ENCODE measurements at regions of chr3 and their contacts with region 1.

Region 1: GRCh38 chr3:12891985-12892839 is 50.8 kb upstream of the RPL32 start:
- DNase-seq: peak; percentile 78
- ATAC-seq: peak; percentile 55
- H3K4me3 ChIP-seq: peak overlapping the region; percentile 50
- H3K27ac ChIP-seq: no peak overlapping the region
- H3K4me1 ChIP-seq: peaks cover 26% of the 10 kb centered on the region
- H3K27me3 ChIP-seq: no peaks in the 10 kb centered on the region
- CTCF ChIP-seq: peak; percentile 95

Region 2: GRCh38 chr3:12484198-12484974 is 407.8 kb before region 1 on chr3 and contains the start of gene TSEN2:
- CTCF ChIA-PET with region 1: interaction called, 6 read pairs
- POLR2A ChIA-PET with region 1: no interaction called
- intact Hi-C with region 1: loop called (anchors 10 kb)
- DNase-seq: peak; percentile 98
- ATAC-seq: peak; percentile 80
- H3K4me3 ChIP-seq: peak within 1 kb of the TSS; percentile 81
- H3K27ac ChIP-seq: peak within 1 kb of the TSS; percentile 81
- H3K4me1 ChIP-seq: peaks cover 57% of the 10 kb centered on the region
- H3K27me3 ChIP-seq: no peaks in the 10 kb centered on the region
- CTCF ChIP-seq: no peak
- total RNA-seq, gene TSEN2: 40.2 and 51.0 TPM in 2 replicates

Region 3: GRCh38 chr3:12601072-12601471 is 291.1 kb before region 1 on chr3:
- CTCF ChIA-PET with region 1: no interaction called
- POLR2A ChIA-PET with region 1: no interaction called
- intact Hi-C with region 1: loop called (anchors 1 kb)
- DNase-seq: peak; percentile 28
- ATAC-seq: peak; percentile 68
- H3K4me3 ChIP-seq: no peak overlapping the region
- H3K27ac ChIP-seq: no peak overlapping the region
- H3K4me1 ChIP-seq: no peaks in the 10 kb centered on the region
- H3K27me3 ChIP-seq: no peaks in the 10 kb centered on the region
- CTCF ChIP-seq: peak; percentile 52

Region 4: GRCh38 chr3:12782172-12782815 is 109.9 kb before region 1 on chr3:
- CTCF ChIA-PET with region 1: no interaction called
- POLR2A ChIA-PET with region 1: interaction called, 4 read pairs
- intact Hi-C with region 1: loop called (anchors 1 kb)
- DNase-seq: no peak
- ATAC-seq: no peak
- H3K4me3 ChIP-seq: no peak overlapping the region
- H3K27ac ChIP-seq: no peak overlapping the region
- H3K4me1 ChIP-seq: no peaks in the 10 kb centered on the region
- H3K27me3 ChIP-seq: no peaks in the 10 kb centered on the region
- CTCF ChIP-seq: no peak

Region 5: DNA sequence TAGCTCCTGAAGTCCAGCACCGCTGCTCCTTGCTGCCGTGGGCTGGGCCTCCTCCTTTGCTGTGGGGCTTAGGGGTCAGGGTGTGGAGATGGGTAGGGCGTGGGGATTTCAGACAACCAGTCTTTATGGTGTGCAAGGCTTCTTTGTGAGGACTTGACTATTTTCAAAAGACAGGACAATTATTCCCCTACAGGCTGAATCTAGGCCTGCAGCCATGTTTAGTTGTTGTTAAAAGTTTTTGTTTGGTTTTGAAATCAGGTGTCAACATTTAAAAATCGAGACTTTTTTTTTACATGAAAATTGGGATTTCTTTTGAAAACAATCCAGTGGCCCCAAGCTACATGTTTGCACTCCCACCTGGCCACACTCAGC is 61.4 kb before region 1 on chr3:
- CTCF ChIA-PET with region 1: no interaction called
- POLR2A ChIA-PET with region 1: no interaction called
- intact Hi-C with region 1: loop called (anchors 2 kb)
- DNase-seq: peak; percentile 34
- ATAC-seq: peak; percentile 0; the same call in 1 of the 2 replicates
- H3K4me3 ChIP-seq: peak overlapping the region; percentile 25; the same call in 1 of the 2 replicates
- H3K27ac ChIP-seq: peak overlapping the region; percentile 94
- H3K4me1 ChIP-seq: peaks cover 42% of the 10 kb centered on the region
- H3K27me3 ChIP-seq: no peaks in the 10 kb centered on the region
- CTCF ChIP-seq: 0 out of 2 replicates have a peak, but pooled peaks have one; percentile 18

Region 6: GRCh38 chr3:12994607-12995388 is 102.6 kb after region 1 on chr3:
- CTCF ChIA-PET with region 1: no interaction called
- POLR2A ChIA-PET with region 1: no interaction called
- intact Hi-C with region 1: loop called (anchors 10 kb)
- DNase-seq: peak; percentile 89
- ATAC-seq: peak; percentile 74
- H3K4me3 ChIP-seq: peak overlapping the region; percentile 84
- H3K27ac ChIP-seq: peak overlapping the region; percentile 21; the same call in 1 of the 2 replicates
- H3K4me1 ChIP-seq: peaks cover 28% of the 10 kb centered on the region
- H3K27me3 ChIP-seq: no peaks in the 10 kb centered on the region
- CTCF ChIP-seq: peak; percentile 92